ENCODE measurements at regions of chr17 and their contacts with region 1.

Region 1: GRCh38 chr17:64025732-64026294 is 5.4 kb upstream of the ICAM2 start:
- DNase-seq: peak; percentile 76 to 98 (median 95)
- ATAC-seq: peak; percentile 95
- H3K4me3 ChIP-seq: peak overlapping the region; percentile 64
- H3K4me3 Mint-ChIP-seq: peak overlapping the region; percentile 74 to 93 (median 83)
- H3K27ac ChIP-seq: peak overlapping the region; percentile 79
- H3K27ac Mint-ChIP-seq: peak overlapping the region; percentile 87 to 100 (median 96)
- H3K4me1 ChIP-seq: peaks cover 49 to 51% of the 10 kb centered on the region in 2 donors
- H3K4me1 Mint-ChIP-seq: peaks cover 37 to 73% (median 68%) of the 10 kb centered on the region in 7 donors
- H3K27me3 ChIP-seq: no peaks in the 10 kb centered on the region
- H3K27me3 Mint-ChIP-seq: no peaks in the 10 kb centered on the region

Region 2: DNA sequence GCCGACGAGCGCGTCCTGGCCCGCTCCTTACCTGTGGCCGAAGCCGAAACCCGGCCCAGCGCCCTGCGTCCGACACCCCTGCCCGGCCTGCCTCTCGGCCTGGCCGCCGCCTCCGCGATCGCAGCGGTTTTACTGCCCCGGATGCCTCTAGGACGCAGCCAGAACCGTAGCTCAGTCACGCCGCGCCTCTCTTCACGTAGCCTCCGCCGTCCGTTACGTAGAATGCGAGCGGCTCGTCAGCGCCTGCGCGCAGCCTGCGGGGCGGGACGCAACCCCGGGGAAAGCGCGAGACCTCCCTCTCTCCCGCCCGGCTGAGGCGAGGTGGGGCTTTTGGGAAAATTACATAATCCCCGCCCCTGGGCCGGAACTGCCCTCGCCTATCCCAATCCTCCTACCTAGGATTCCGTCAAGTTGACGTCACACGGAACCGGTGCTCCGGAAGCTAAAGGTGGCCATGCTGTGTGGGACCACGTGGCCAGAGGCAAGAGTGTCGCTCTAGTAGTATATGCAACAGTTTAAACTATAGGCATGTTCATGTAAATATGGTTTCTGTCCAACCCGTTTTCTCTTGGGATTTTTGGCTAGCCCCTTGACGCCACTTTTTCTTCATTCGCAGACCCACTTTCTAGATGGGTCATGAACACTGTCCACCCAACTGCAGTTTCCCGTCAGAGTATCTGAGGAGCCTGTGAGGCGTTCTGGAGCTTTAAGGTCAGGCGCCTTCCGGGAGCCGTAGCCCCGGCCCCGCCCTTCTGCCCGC is 252.3 kb before region 1 on chr17 and contains the start of gene CCDC47:
- CTCF ChIA-PET with region 1: interaction called, 6 read pairs
- POLR2A ChIA-PET with region 1: no interaction called
- intact Hi-C with region 1: loop called (anchors 5 to 10 kb)
- DNase-seq: peak; percentile 92 to 99 (median 99)
- ATAC-seq: peak; percentile 88
- H3K4me3 ChIP-seq: peak within 1 kb of the TSS; percentile 85
- H3K4me3 Mint-ChIP-seq: peak within 1 kb of the TSS; percentile 91 to 99 (median 98)
- H3K27ac ChIP-seq: peak within 1 kb of the TSS; percentile 100
- H3K27ac Mint-ChIP-seq: peak within 1 kb of the TSS; percentile 97 to 100 (median 99)
- H3K4me1 ChIP-seq: peaks cover 21 to 46% of the 10 kb centered on the region in 2 donors
- H3K4me1 Mint-ChIP-seq: peaks cover 31 to 84% (median 62%) of the 10 kb centered on the region in 7 donors
- H3K27me3 ChIP-seq: no peaks in the 10 kb centered on the region
- H3K27me3 Mint-ChIP-seq: peaks cover 0 to 7% (median 0%) of the 10 kb centered on the region in 5 donors
- total RNA-seq, gene CCDC47: 31.8 to 62.9 (median 34.7) TPM

Region 3: DNA sequence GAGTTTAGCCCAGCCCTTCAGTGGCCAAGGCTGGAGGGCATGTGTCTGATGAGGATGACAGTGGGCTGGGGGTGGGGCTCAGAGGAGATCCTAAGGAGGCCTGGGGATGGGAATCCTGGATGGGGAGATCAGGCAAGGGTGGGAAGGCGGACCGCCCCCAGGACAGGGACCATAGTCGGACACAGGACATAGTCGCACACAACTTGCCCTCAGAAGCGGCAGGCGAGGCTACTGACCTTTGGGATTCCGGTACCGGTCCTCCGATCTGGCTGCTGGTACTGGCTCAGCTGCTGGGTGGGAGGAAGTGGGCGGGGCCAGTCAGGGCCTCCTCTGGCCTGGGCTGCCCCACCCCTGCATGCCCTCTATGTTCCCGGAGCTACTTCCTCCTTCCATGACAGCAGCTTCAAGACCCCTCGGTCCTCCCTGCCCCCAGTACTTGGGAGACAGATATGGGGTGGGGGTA is 94.7 kb before region 1 on chr17:
- CTCF ChIA-PET with region 1: interaction called, 8 read pairs
- POLR2A ChIA-PET with region 1: interaction called, 18 read pairs
- intact Hi-C with region 1: loop called in 1 of 2 experiments (anchors 5 kb)
- DNase-seq: peak; percentile 29 to 56 (median 48)
- ATAC-seq: peak; percentile 82
- H3K4me3 ChIP-seq: peak overlapping the region; percentile 85
- H3K4me3 Mint-ChIP-seq: peak overlapping the region; percentile 88 to 99 (median 96)
- H3K27ac ChIP-seq: peak overlapping the region; percentile 84
- H3K27ac Mint-ChIP-seq: peak overlapping the region; percentile 87 to 96 (median 93)
- H3K4me1 ChIP-seq: peaks cover 13 to 21% of the 10 kb centered on the region in 2 donors
- H3K4me1 Mint-ChIP-seq: peaks cover 11 to 28% (median 24%) of the 10 kb centered on the region in 7 donors
- H3K27me3 ChIP-seq: no peaks in the 10 kb centered on the region
- H3K27me3 Mint-ChIP-seq: peaks cover 0 to 5% (median 0%) of the 10 kb centered on the region in 5 donors

Region 4: DNA sequence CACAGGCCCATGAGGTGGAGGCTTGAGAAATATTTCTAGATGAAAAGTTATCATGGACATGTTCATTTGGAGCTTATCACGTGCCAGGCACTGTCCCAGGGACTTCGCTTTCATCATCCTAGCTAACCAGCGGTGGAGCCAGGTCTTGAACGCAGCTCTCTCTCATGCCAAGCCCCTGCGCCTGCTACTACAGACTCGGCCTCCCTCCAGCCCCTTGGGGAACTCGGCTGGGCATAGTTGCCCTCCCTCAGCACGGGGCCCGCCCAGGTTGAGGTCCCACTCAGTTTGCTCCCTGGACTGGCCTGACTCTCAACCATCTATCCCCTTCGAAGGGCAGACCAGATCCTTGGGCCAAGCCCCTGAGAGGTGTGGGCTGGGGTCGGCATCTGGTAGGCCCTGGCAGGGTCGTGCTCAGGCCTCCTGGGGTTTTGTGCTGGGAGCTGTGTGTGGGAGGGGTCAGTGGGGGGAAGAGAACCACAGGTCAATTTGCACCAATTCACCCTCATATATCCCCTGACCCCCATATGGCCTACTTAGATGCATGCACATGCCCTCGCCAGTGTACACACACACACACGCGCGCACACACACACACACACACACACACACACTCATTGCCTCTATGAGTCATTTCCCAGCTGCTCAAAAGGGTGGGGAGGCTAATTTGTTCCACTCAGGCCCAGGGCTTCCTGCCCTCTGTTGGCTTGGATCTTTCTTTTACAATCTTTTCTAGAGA is 41.0 kb before region 1 on chr17:
- CTCF ChIA-PET with region 1: interaction called, 14 read pairs
- POLR2A ChIA-PET with region 1: interaction called, 11 read pairs
- intact Hi-C with region 1: loop called in 1 of 2 experiments (anchors 1 kb)
- DNase-seq: peak in 5 of 9 donors; percentile 18 to 62 (median 34)
- ATAC-seq: peak; percentile 92
- H3K4me3 ChIP-seq: no peak overlapping the region
- H3K4me3 Mint-ChIP-seq: peak overlapping the region in 1 of 10 donors; percentile 62
- H3K27ac ChIP-seq: no peak overlapping the region
- H3K27ac Mint-ChIP-seq: peak overlapping the region in 7 of 9 donors; percentile 28 to 85 (median 69)
- H3K4me1 ChIP-seq: peaks cover 4 to 9% of the 10 kb centered on the region in 2 donors
- H3K4me1 Mint-ChIP-seq: peaks cover 8 to 24% (median 15%) of the 10 kb centered on the region in 7 donors
- H3K27me3 ChIP-seq: no peaks in the 10 kb centered on the region
- H3K27me3 Mint-ChIP-seq: no peaks in the 10 kb centered on the region

Region 5: GRCh38 chr17:64051153-64051552 is 25.3 kb after region 1 on chr17:
- CTCF ChIA-PET with region 1: interaction called, 28 read pairs
- POLR2A ChIA-PET with region 1: interaction called, 19 read pairs
- intact Hi-C with region 1: loop called in 1 of 2 experiments (anchors 1 kb)
- DNase-seq: peak in 7 of 9 donors; percentile 58 to 86 (median 76)
- ATAC-seq: peak; percentile 99
- H3K4me3 ChIP-seq: peak overlapping the region; percentile 19
- H3K4me3 Mint-ChIP-seq: peak overlapping the region; percentile 1 to 73 (median 60)
- H3K27ac ChIP-seq: peak overlapping the region; percentile 55
- H3K27ac Mint-ChIP-seq: peak overlapping the region; percentile 86 to 97 (median 95)
- H3K4me1 ChIP-seq: peaks cover 32 to 37% of the 10 kb centered on the region in 2 donors
- H3K4me1 Mint-ChIP-seq: peaks cover 26 to 52% (median 43%) of the 10 kb centered on the region in 7 donors
- H3K27me3 ChIP-seq: no peaks in the 10 kb centered on the region
- H3K27me3 Mint-ChIP-seq: no peaks in the 10 kb centered on the region

Region 6: DNA sequence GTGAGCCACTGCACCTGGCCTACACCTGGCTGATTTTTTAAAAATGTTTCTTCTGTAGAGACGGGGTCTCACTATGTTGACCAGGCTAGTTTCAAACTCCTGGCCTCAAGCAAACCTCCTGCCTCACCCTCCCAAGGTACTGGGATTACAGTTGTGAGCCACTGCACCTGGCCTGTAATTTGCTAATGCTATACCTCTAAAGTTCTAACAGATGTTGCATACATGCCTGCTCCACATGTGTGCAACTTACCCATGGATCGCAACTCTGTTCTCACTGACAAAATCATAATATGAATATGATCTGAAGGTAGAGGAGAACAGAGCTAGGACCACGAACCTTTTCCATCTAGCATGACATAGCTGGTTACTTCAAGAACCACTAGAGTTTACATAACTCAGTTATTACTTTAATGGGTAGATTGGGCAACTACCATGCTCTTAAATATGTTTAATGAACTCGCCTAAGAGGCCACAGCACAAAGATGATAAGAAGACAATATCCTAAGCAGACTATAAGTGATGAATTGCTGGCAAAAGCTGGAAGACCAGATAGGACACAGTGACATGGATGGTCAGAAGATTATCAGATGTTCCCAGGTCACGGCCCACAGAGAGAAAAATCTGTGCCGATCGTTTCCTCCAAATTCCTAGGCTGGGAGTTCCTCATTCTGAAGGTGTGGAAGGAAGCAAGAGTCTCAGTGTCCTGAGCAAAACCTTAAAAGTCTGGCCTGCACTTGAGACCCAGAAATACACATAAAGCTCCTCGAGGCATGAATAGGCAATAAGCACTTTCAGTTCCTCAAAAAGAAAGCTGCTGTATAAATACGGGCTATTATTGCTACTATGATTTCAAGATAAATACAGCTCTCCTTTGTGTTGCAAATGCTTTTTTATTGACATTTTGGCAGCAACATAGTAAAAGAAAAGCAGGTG is 48.2 kb after region 1 on chr17:
- CTCF ChIA-PET with region 1: interaction called, 12 read pairs
- POLR2A ChIA-PET with region 1: interaction called, 4 read pairs
- intact Hi-C with region 1: loop called in 1 of 2 experiments (anchors 5 kb)
- DNase-seq: no peak
- ATAC-seq: peak; percentile 72
- H3K4me3 ChIP-seq: no peak overlapping the region
- H3K4me3 Mint-ChIP-seq: no peak overlapping the region
- H3K27ac ChIP-seq: no peak overlapping the region
- H3K27ac Mint-ChIP-seq: peak overlapping the region in 4 of 9 donors; percentile 3 to 29 (median 14)
- H3K4me1 ChIP-seq: no peaks in the 10 kb centered on the region
- H3K4me1 Mint-ChIP-seq: peaks cover 0 to 30% (median 12%) of the 10 kb centered on the region in 7 donors
- H3K27me3 ChIP-seq: no peaks in the 10 kb centered on the region
- H3K27me3 Mint-ChIP-seq: no peaks in the 10 kb centered on the region

Region 7: DNA sequence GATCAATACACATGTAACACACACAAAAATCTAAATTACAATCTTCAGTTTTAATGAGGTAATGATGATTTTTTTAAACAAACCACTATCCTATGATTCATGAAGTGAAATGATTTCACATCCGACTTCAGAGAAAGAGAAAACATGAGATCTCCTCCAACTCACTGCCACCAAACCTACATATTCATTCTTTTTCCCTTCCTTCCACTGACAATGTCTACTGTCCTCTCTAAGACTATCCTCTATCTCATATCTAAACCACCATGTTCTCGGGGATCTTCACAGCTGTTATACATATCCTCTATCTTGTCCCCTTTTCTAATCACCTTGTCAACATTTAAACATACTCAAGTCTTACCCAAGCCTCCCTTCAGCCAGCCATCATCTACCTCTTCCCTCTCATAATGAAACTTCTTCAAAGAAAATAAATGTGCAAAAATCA is 582.7 kb after region 1 on chr17:
- CTCF ChIA-PET with region 1: no interaction called
- POLR2A ChIA-PET with region 1: no interaction called
- intact Hi-C with region 1: no loop called
- DNase-seq: no peak
- ATAC-seq: no peak
- H3K4me3 ChIP-seq: no peak overlapping the region
- H3K4me3 Mint-ChIP-seq: peak overlapping the region in 7 of 10 donors; percentile 0 to 10 (median 1)
- H3K27ac ChIP-seq: no peak overlapping the region
- H3K27ac Mint-ChIP-seq: peak overlapping the region; percentile 2 to 75 (median 29)
- H3K4me1 ChIP-seq: peaks cover 0 to 3% of the 10 kb centered on the region in 2 donors
- H3K4me1 Mint-ChIP-seq: peaks cover 15 to 52% (median 45%) of the 10 kb centered on the region in 7 donors
- H3K27me3 ChIP-seq: no peaks in the 10 kb centered on the region
- H3K27me3 Mint-ChIP-seq: no peaks in the 10 kb centered on the region